ENCODE measurements at regions of chr19 and their contacts with region 1.

Region 1: GRCh38 chr19:47047763-47048405 is 540 bp downstream of the TMEM160 start:
- DNase-seq: peak; percentile 79 to 87 (median 80)
- H3K4me3 ChIP-seq: peak overlapping the region; percentile 71 to 92 (median 79)
- H3K4me3 Mint-ChIP-seq: peak overlapping the region; percentile 91 to 95
- H3K27ac ChIP-seq: peak overlapping the region; percentile 42 to 77
- H3K27ac Mint-ChIP-seq: peak overlapping the region; percentile 86 to 95 (median 89)
- H3K4me1 ChIP-seq: peaks cover 10 to 18% of the 10 kb centered on the region in 2 donors
- H3K4me1 Mint-ChIP-seq: peaks cover 35% of the 10 kb centered on the region
- H3K27me3 ChIP-seq: no peaks in the 10 kb centered on the region
- H3K27me3 Mint-ChIP-seq: peaks cover 0 to 2% (median 0%) of the 10 kb centered on the region in 3 donors
- CTCF ChIP-seq: no peak

Region 2: DNA sequence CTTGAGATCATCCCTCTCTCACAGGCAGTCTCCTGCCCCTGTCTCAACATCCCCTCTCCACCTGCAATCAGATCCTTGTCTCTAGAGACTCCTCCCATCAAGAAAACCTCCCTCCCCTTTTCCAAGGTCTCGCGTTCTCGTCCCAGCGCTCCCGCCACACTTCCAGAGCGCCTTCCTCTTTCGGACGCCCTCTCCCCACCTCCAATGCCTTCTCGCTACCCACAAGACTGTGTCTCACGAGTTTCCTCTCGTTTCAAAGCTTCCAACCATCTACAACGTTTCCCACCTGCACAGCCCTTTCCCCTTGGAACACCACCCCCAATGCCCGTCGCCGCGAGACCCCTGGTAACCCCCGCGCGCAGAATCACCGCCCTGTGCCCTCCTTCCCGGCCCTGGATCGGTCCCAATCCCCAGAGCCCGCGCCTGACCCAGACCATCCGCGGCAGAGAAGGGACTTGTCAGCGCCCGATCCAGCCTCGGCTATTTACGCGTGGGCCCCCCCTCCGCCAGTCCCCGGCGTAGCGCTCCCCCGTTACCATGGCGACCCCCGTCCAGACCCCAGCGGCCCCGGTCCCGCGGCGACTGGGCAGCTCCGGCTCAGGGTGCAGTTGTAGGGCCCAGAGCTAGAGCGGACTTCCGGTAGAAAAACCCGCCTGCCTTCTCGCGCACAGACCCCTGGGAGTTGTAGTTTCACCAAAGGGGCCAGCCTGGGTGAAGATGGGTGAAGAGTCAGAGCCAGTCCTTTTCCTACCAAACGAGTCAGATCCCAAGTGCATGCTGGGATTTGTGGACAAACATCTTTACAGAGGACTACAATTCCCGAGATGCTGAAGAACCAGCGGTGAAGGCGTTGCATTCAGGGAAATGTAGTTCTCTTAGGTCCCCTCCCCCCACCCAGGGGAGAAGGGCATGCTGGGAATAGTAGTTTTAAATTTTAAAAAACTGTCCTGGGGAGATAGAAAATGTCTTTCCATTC is 197.4 kb before region 1 on chr19 and contains the start of gene AP2S1:
- intact Hi-C with region 1: loop called in 1 of 2 experiments (anchors 2 kb)
- DNase-seq: peak; percentile 96 to 98 (median 97)
- H3K4me3 ChIP-seq: peak within 1 kb of the TSS; percentile 75 to 92 (median 79)
- H3K4me3 Mint-ChIP-seq: peak within 1 kb of the TSS; percentile 95 to 100
- H3K27ac ChIP-seq: peak within 1 kb of the TSS; percentile 60 to 78
- H3K27ac Mint-ChIP-seq: peak within 1 kb of the TSS; percentile 88 to 96 (median 93)
- H3K4me1 ChIP-seq: peaks cover 32 to 40% of the 10 kb centered on the region in 2 donors
- H3K4me1 Mint-ChIP-seq: peaks cover 37% of the 10 kb centered on the region
- H3K27me3 ChIP-seq: no peaks in the 10 kb centered on the region
- H3K27me3 Mint-ChIP-seq: peaks cover 3 to 6% (median 4%) of the 10 kb centered on the region in 3 donors
- CTCF ChIP-seq: no peak
- polyA plus RNA-seq, gene AP2S1: 123 to 194 (median 170) TPM

Region 3: DNA sequence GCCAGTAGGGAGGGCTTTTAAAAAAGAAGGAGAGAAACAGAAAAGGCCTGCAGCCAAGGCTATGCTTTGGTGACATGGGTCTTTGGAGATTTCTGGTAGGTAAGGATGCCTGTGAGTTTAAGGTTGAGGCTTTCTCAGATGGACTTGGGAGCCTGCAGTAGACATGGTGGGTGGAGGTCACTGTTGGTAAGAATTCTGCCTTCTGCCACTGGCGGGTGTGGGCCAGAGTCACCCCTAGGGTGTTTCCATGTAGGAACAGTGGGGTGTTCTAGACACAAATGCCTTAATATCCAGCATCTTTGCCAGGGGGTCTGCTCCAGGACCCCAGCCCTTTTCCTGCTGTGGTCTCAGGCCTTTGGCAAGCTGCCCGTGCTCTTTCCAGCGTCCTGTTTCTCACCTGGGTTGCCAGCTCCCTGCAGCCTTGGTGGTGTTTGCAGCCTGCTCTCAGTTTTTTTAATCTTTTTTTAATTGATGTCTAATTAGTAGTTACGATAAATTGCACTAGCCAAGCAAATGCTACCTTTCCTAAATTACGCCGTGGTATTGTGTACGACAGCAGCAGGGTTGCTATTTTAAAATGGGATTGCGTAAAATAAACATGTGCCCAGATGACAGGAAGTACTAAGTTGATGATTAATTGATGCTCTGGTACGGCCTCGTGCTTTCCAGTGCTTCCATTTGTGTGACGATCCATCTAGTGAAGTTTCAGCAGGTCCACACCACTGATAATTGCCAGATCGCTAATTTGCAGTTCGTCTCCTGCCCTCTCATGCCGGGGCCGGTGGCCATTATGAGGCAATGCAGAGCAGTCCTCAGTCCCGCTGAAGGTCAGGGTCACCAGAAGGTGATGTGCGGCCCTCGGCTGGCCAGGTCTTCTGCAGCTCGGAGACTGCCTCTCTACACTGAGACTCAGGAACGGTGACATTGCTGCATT is 63.5 kb before region 1 on chr19:
- intact Hi-C with region 1: no loop called
- DNase-seq: peak; percentile 62 to 82 (median 67)
- H3K4me3 ChIP-seq: no peak overlapping the region
- H3K4me3 Mint-ChIP-seq: peak overlapping the region in 1 of 2 donors; percentile 42
- H3K27ac ChIP-seq: no peak overlapping the region
- H3K27ac Mint-ChIP-seq: peak overlapping the region in 6 of 7 donors; percentile 50 to 75 (median 67)
- H3K4me1 ChIP-seq: peaks cover 34 to 42% of the 10 kb centered on the region in 2 donors
- H3K4me1 Mint-ChIP-seq: peaks cover 39% of the 10 kb centered on the region
- H3K27me3 ChIP-seq: no peaks in the 10 kb centered on the region
- H3K27me3 Mint-ChIP-seq: peaks cover 0 to 4% (median 0%) of the 10 kb centered on the region in 3 donors
- CTCF ChIP-seq: no peak

Region 4: DNA sequence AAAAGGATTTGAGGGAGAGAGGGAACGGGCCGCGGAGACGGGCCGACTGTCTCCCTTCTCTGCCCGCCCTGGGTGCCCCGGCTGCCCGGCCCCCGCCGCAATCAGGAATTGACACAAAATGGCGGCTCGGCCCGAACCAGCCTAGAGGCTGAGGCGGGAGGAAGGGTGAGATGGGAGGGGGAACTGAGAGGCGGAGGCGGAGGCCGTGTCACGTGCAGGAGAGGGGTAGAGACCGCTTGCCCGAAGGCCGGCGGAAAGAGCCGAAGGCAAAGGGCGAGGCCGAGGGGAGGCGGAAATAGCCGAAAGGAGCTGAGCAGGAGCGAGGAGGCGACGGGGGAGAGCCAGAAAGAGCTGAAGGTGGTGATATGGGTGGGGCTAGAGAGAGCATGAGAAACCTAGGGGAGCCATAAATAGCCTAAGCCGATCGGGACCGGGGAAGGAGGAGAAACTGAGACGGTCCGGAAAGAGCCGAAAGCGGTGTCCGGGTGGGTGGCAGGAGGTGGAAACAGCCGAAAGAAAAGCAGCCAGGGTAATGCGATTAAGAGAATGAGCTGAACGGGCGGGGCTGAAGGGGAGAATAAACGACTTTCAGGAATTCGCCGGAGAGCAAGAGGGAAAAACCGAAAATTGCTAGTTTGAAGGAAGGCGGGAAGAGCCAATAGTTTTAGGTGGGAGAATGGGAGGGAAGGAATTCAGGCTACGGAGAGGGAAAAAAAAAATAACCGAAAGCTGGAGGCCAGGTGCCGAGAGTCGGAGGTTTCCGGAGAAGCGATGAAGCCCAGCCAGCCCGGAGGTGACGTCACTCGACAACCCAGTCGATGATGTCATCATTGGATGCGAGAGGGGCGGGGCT is 65.3 kb after region 1 on chr19 and contains the start of gene ZC3H4:
- intact Hi-C with region 1: loop called in 1 of 2 experiments (anchors 2 kb)
- DNase-seq: peak; percentile 99
- H3K4me3 ChIP-seq: peak within 1 kb of the TSS; percentile 93 to 97 (median 94)
- H3K4me3 Mint-ChIP-seq: peak within 1 kb of the TSS; percentile 99
- H3K27ac ChIP-seq: peak within 1 kb of the TSS; percentile 97 to 100
- H3K27ac Mint-ChIP-seq: peak within 1 kb of the TSS; percentile 99 to 100 (median 100)
- H3K4me1 ChIP-seq: peaks cover 25 to 31% of the 10 kb centered on the region in 2 donors
- H3K4me1 Mint-ChIP-seq: peaks cover 33% of the 10 kb centered on the region
- H3K27me3 ChIP-seq: no peaks in the 10 kb centered on the region
- H3K27me3 Mint-ChIP-seq: peaks cover 0 to 15% (median 8%) of the 10 kb centered on the region in 3 donors
- CTCF ChIP-seq: no peak
- polyA plus RNA-seq, gene ZC3H4: 0.24 to 9.9 (median 0.60) TPM

Region 5: DNA sequence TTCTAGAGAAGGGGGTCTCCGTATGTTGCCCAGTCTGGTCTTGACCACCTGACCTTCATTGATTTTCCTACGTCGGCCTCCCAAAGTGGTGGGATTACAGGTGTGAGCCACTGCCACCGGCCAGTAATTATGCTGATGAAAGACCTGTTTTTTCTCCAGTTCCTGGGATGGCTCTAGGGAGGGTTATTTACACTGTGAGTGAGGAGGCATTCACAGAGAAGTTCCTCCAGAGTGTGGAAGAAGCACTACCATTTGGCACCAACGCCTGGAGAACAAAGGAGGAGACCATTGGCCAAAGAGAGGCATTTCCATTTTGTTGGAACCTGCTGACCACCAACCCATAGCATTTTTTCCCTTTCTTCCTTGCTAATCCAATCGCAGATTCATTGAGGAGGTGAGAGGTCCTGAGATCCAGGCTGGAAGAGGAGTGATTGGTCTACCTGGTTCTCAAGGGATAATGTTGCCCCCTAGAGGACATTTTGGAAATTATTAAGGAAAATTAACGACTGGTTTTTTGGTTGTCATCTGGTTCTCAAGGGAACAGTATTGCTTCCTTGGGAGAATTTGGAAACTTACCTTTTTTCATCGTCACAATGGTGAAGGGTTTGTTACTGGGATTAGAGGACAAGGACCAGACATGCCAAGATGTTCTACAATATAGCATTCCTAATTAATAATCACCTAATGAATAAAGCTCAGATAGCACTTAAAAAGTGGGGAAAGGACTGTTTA is 77.2 kb after region 1 on chr19:
- intact Hi-C with region 1: no loop called
- DNase-seq: peak; percentile 52 to 77 (median 69)
- H3K4me3 ChIP-seq: no peak overlapping the region
- H3K4me3 Mint-ChIP-seq: no peak overlapping the region
- H3K27ac ChIP-seq: no peak overlapping the region
- H3K27ac Mint-ChIP-seq: no peak overlapping the region
- H3K4me1 ChIP-seq: no peaks in the 10 kb centered on the region
- H3K4me1 Mint-ChIP-seq: peaks cover 2% of the 10 kb centered on the region
- H3K27me3 ChIP-seq: no peaks in the 10 kb centered on the region
- H3K27me3 Mint-ChIP-seq: peaks cover 3 to 8% (median 5%) of the 10 kb centered on the region in 3 donors
- CTCF ChIP-seq: peak; percentile 77